ENCODE measurements at regions of chr3 and their contacts with region 1.

Region 1: GRCh38 chr3:100068826-100069225 is 45.5 kb downstream of the FILIP1L start:
- DNase-seq: peak; percentile 90
- ATAC-seq: peak; percentile 87
- H3K4me3 Mint-ChIP-seq: no peak overlapping the region
- H3K27ac Mint-ChIP-seq: no peak overlapping the region
- H3K4me1 Mint-ChIP-seq: peaks cover 30% of the 10 kb centered on the region
- H3K27me3 Mint-ChIP-seq: no peaks in the 10 kb centered on the region

Region 2: GRCh38 chr3:99645277-99646106 is 423.3 kb before region 1 on chr3:
- CTCF ChIA-PET with region 1: no interaction called
- POLR2A ChIA-PET with region 1: no interaction called
- intact Hi-C with region 1: no loop called
- DNase-seq: no peak
- ATAC-seq: no peak
- H3K4me3 Mint-ChIP-seq: no peak overlapping the region
- H3K27ac Mint-ChIP-seq: no peak overlapping the region
- H3K4me1 Mint-ChIP-seq: no peaks in the 10 kb centered on the region
- H3K27me3 Mint-ChIP-seq: peaks cover 32% of the 10 kb centered on the region

Region 3: DNA sequence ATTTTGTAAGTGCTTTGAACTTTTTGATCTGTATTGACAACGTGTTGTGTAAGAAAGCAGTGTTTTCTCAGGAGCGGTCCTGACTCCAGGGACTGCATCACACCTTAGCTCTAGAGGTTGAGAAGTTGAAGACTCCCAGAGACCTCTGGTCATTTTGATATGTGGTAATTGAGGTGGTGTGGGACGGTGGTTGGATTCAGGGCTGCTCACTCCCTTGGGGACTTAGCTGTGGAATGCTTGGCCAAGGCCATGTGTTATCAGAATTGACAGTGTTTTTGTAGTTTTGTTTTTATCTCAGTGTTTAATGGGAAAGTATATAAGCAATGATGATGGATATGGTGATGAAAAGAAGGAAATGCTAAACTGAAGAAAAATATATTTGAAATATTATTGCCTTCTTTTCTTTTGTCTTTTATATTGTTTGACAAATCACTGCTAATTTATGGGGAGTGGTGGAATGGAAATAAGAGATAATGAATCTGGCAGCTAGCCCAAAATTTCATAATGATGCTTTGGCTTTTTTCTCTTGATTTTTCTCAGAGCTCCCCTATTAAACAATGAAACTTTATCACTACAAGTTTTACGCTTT is 235.1 kb before region 1 on chr3:
- CTCF ChIA-PET with region 1: no interaction called
- POLR2A ChIA-PET with region 1: no interaction called
- intact Hi-C with region 1: loop called (anchors 2 to 10 kb)
- DNase-seq: no peak
- ATAC-seq: no peak
- H3K4me3 Mint-ChIP-seq: no peak overlapping the region
- H3K27ac Mint-ChIP-seq: no peak overlapping the region
- H3K4me1 Mint-ChIP-seq: peaks cover 8% of the 10 kb centered on the region
- H3K27me3 Mint-ChIP-seq: no peaks in the 10 kb centered on the region

Region 4: DNA sequence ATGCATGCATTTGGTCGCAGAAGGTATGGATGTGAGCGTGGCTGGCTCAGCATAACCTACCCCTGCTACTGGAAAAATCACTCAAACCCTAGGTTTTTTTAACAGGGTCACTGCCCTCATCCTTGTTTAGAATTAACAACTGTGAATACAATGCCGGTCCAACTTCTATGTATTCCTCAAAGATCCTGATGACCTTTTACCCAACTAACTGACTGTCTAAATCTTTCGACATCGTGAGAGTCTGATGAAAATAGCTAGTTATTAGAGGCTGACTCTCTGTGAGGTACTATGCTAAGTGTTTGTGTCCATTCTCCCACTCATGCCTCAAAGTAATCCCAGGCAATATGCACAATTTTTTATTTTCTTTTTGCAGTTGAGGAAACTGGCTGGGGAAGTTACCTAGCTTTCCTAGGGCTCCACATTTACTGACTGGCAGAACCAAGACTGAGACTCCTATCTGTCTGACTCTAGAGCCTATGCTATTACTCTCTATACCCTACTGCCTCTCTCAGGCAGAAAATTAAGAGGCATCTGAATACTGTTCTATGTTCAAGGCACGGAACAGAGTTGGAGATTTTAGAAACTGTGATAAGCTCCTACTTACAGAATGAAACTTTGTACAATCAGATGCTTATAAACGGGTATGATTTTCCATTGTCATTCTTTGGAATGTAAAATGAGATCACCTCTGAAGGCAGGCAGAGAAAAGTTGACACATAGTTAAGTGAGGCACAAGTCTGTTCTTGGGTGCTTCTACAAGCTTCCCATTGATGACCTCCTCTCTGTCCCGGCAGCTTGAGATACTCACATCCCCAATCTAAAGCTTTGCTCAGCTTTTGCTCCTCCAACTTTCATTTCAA is 10.9 kb before region 1 on chr3:
- CTCF ChIA-PET with region 1: interaction called, 15 read pairs
- POLR2A ChIA-PET with region 1: no interaction called
- intact Hi-C with region 1: no loop called
- DNase-seq: no peak
- ATAC-seq: no peak
- H3K4me3 Mint-ChIP-seq: no peak overlapping the region
- H3K27ac Mint-ChIP-seq: no peak overlapping the region
- H3K4me1 Mint-ChIP-seq: no peaks in the 10 kb centered on the region
- H3K27me3 Mint-ChIP-seq: no peaks in the 10 kb centered on the region

Region 5: GRCh38 chr3:100089812-100090668 is 21.2 kb after region 1 on chr3:
- CTCF ChIA-PET with region 1: interaction called, 14 read pairs
- POLR2A ChIA-PET with region 1: interaction called, 3 read pairs
- intact Hi-C with region 1: no loop called
- DNase-seq: peak; percentile 50
- ATAC-seq: peak; percentile 81
- H3K4me3 Mint-ChIP-seq: no peak overlapping the region
- H3K27ac Mint-ChIP-seq: no peak overlapping the region
- H3K4me1 Mint-ChIP-seq: peaks cover 21% of the 10 kb centered on the region
- H3K27me3 Mint-ChIP-seq: no peaks in the 10 kb centered on the region

Region 6: GRCh38 chr3:100254168-100254777 is 185.4 kb after region 1 on chr3:
- CTCF ChIA-PET with region 1: interaction called, 27 read pairs
- POLR2A ChIA-PET with region 1: no interaction called
- intact Hi-C with region 1: loop called (anchors 1 kb)
- DNase-seq: peak; percentile 58
- ATAC-seq: peak; percentile 80
- H3K4me3 Mint-ChIP-seq: no peak overlapping the region
- H3K27ac Mint-ChIP-seq: no peak overlapping the region
- H3K4me1 Mint-ChIP-seq: peaks cover 11% of the 10 kb centered on the region
- H3K27me3 Mint-ChIP-seq: peaks cover 2% of the 10 kb centered on the region